WTC11 (cell line): ENCODE measurements at regions of chrX and their contacts with region 1.

Region 1: DNA sequence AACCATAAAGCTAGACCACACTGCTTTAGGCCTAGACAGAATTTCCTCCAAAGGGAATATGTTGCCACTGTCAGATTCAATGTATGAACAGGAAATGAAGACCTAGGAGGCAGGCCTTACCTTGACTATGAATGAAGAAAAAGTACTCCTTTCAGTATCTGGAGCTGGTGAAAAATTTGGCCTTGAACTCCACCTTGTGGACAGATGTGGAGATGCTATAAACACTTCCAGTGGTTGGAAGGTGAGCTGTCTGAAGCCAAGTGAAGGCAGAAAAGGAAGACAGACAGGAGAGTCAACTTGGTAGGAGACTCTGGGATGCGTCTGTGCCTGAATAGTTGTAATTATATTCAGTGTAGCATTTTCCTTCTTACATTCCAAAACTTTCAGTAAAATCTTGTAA is 17.2 kb downstream of the SPIN3 start:
- DNase-seq: peak; percentile 25
- ATAC-seq: peak; percentile 75
- H3K4me3 Mint-ChIP-seq: no peak overlapping the region
- H3K27ac Mint-ChIP-seq: no peak overlapping the region
- H3K4me1 Mint-ChIP-seq: no peaks in the 10 kb centered on the region
- H3K27me3 Mint-ChIP-seq: no peaks in the 10 kb centered on the region
- CTCF ChIP-seq: peak; percentile 31; the same call in 1 of the 2 replicates

Region 2: GRCh38 chrX:56764153-56764974 is 213.8 kb before region 1 on chrX:
- CTCF ChIA-PET with region 1: interaction called, 16 read pairs
- POLR2A ChIA-PET with region 1: no interaction called
- DNase-seq: peak; percentile 50
- ATAC-seq: peak; percentile 51
- H3K4me3 Mint-ChIP-seq: no peak overlapping the region
- H3K27ac Mint-ChIP-seq: peak overlapping the region; percentile 86; the same call in 1 of the 2 replicates
- H3K4me1 Mint-ChIP-seq: peaks cover 24% of the 10 kb centered on the region
- H3K27me3 Mint-ChIP-seq: no peaks in the 10 kb centered on the region
- CTCF ChIP-seq: no peak